CD14-positive monocyte (primary cell): ENCODE measurements at regions of chr5 and their contacts with region 1.

Region 1: GRCh38 chr5:176537608-176538504 is 654 bp upstream of the RNF44 start:
- DNase-seq: peak; percentile 99 to 100 (median 100)
- H3K4me3 ChIP-seq: peak overlapping the region; percentile 64 to 98 (median 96)
- H3K4me3 Mint-ChIP-seq: peak overlapping the region; percentile 95
- H3K27ac ChIP-seq: peak overlapping the region; percentile 93 to 96
- H3K27ac Mint-ChIP-seq: peak overlapping the region; percentile 98 to 100 (median 99)
- H3K4me1 ChIP-seq: peaks cover 71 to 86% of the 10 kb centered on the region in 2 donors
- H3K4me1 Mint-ChIP-seq: peaks cover 73% of the 10 kb centered on the region
- H3K27me3 ChIP-seq: no peaks in the 10 kb centered on the region
- H3K27me3 Mint-ChIP-seq: no peaks in the 10 kb centered on the region
- CTCF ChIP-seq: no peak

Region 2: GRCh38 chr5:176388444-176389134 is 149.3 kb before region 1 on chr5 and contains the starts of genes HIGD2A and NOP16:
- intact Hi-C with region 1: loop called (anchors 2 to 10 kb)
- DNase-seq: peak; percentile 97 to 99 (median 98)
- H3K4me3 ChIP-seq: peak within 1 kb of the TSS; percentile 66 to 98 (median 73)
- H3K4me3 Mint-ChIP-seq: peak within 1 kb of the TSS; percentile 98 to 99
- H3K27ac ChIP-seq: peak within 1 kb of the TSS; percentile 95 to 96
- H3K27ac Mint-ChIP-seq: peak within 1 kb of the TSS; percentile 98 to 100 (median 100)
- H3K4me1 ChIP-seq: peaks cover 34 to 45% of the 10 kb centered on the region in 2 donors
- H3K4me1 Mint-ChIP-seq: peaks cover 47% of the 10 kb centered on the region
- H3K27me3 ChIP-seq: no peaks in the 10 kb centered on the region
- H3K27me3 Mint-ChIP-seq: peaks cover 0 to 2% (median 0%) of the 10 kb centered on the region in 3 donors
- CTCF ChIP-seq: no peak
- polyA plus RNA-seq, gene HIGD2A: 101 to 298 (median 260) TPM
- polyA plus RNA-seq, gene NOP16: 17.2 to 23.4 (median 17.6) TPM

Region 3: GRCh38 chr5:176415952-176416924 is 121.6 kb before region 1 on chr5 and contains the start of gene CLTB:
- intact Hi-C with region 1: loop called in 1 of 2 experiments (anchors 10 kb)
- DNase-seq: peak; percentile 86 to 93 (median 87)
- H3K4me3 ChIP-seq: peak within 1 kb of the TSS; percentile 65 to 92 (median 76)
- H3K4me3 Mint-ChIP-seq: peak within 1 kb of the TSS; percentile 79 to 87
- H3K27ac ChIP-seq: peak within 1 kb of the TSS; percentile 20 to 85
- H3K27ac Mint-ChIP-seq: peak within 1 kb of the TSS; percentile 57 to 89 (median 72)
- H3K4me1 ChIP-seq: peaks cover 16 to 23% of the 10 kb centered on the region in 2 donors
- H3K4me1 Mint-ChIP-seq: peaks cover 44% of the 10 kb centered on the region
- H3K27me3 ChIP-seq: no peaks in the 10 kb centered on the region
- H3K27me3 Mint-ChIP-seq: peaks cover 2 to 5% (median 2%) of the 10 kb centered on the region in 3 donors
- CTCF ChIP-seq: peak; percentile 78
- polyA plus RNA-seq, gene CLTB: 63.2 to 87.6 (median 75.2) TPM

Region 4: DNA sequence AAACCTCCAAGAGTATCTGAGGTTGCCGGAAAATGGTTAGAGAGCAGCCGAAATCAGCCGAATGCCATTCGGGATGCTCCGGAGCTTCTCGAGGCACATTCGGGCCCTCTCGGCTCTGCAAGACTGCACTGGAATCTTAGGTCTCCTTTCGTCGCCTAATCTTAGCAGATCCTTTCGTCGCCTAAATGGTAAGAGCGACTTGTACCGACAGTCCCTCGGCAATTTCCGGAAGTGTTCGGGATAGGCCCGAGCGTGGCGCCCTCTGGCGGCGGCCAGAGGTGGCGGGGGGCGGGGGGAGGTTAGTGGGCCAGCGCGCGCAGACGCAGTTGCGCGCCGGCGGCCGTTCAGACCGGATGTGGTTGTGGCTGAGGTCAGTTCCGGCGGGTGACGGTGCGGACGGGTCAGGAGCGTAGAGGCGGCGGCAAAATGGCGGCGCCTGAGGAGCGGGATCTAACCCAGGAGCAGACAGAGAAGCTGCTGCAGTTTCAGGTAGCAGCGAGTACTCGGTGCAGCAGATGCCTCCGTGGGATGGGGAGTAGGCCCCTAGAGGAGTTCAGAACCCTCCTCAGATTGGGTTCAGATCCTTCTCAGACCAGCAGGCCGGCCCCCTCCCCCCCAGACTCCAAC is 89.8 kb before region 1 on chr5 and contains the start of gene FAF2:
- intact Hi-C with region 1: loop called (anchors 5 kb)
- DNase-seq: peak; percentile 95 to 97 (median 96)
- H3K4me3 ChIP-seq: peak within 1 kb of the TSS; percentile 84 to 98 (median 97)
- H3K4me3 Mint-ChIP-seq: peak within 1 kb of the TSS; percentile 95 to 99
- H3K27ac ChIP-seq: peak within 1 kb of the TSS; percentile 99 to 100
- H3K27ac Mint-ChIP-seq: peak within 1 kb of the TSS; percentile 99 to 100 (median 100)
- H3K4me1 ChIP-seq: peaks cover 24 to 25% of the 10 kb centered on the region in 2 donors
- H3K4me1 Mint-ChIP-seq: peaks cover 23% of the 10 kb centered on the region
- H3K27me3 ChIP-seq: no peaks in the 10 kb centered on the region
- H3K27me3 Mint-ChIP-seq: peaks cover 0 to 4% (median 0%) of the 10 kb centered on the region in 3 donors
- CTCF ChIP-seq: peak; percentile 96
- polyA plus RNA-seq, gene FAF2: 11.5 to 14.8 (median 12.2) TPM

Region 5: GRCh38 chr5:176519810-176520720 is 17.8 kb before region 1 on chr5:
- intact Hi-C with region 1: no loop called
- DNase-seq: no peak
- H3K4me3 ChIP-seq: no peak overlapping the region
- H3K4me3 Mint-ChIP-seq: no peak overlapping the region
- H3K27ac ChIP-seq: no peak overlapping the region
- H3K27ac Mint-ChIP-seq: no peak overlapping the region
- H3K4me1 ChIP-seq: peaks cover 0 to 5% of the 10 kb centered on the region in 2 donors
- H3K4me1 Mint-ChIP-seq: peaks cover 23% of the 10 kb centered on the region
- H3K27me3 ChIP-seq: no peaks in the 10 kb centered on the region
- H3K27me3 Mint-ChIP-seq: peaks cover 2 to 4% (median 3%) of the 10 kb centered on the region in 3 donors
- CTCF ChIP-seq: no peak

Region 6: GRCh38 chr5:176573564-176574296 is 35.9 kb after region 1 on chr5:
- intact Hi-C with region 1: loop called in 1 of 2 experiments (anchors 5 kb)
- DNase-seq: peak; percentile 48 to 62 (median 61)
- H3K4me3 ChIP-seq: no peak overlapping the region
- H3K4me3 Mint-ChIP-seq: no peak overlapping the region
- H3K27ac ChIP-seq: no peak overlapping the region
- H3K27ac Mint-ChIP-seq: no peak overlapping the region
- H3K4me1 ChIP-seq: no peaks in the 10 kb centered on the region
- H3K4me1 Mint-ChIP-seq: peaks cover 5% of the 10 kb centered on the region
- H3K27me3 ChIP-seq: no peaks in the 10 kb centered on the region
- H3K27me3 Mint-ChIP-seq: peaks cover 4 to 12% (median 12%) of the 10 kb centered on the region in 3 donors
- CTCF ChIP-seq: peak; percentile 95

Region 7: GRCh38 chr5:176647030-176647866 is 109.4 kb after region 1 on chr5 and contains the start of gene TSPAN17:
- intact Hi-C with region 1: loop called in 1 of 2 experiments (anchors 5 kb)
- DNase-seq: peak; percentile 96 to 99 (median 98)
- H3K4me3 ChIP-seq: peak within 1 kb of the TSS; percentile 60 to 88 (median 69)
- H3K4me3 Mint-ChIP-seq: peak within 1 kb of the TSS; percentile 84 to 92
- H3K27ac ChIP-seq: peak within 1 kb of the TSS in 1 of 2 donors; percentile 74
- H3K27ac Mint-ChIP-seq: peak within 1 kb of the TSS; percentile 32 to 85 (median 74)
- H3K4me1 ChIP-seq: peaks cover 22 to 28% of the 10 kb centered on the region in 2 donors
- H3K4me1 Mint-ChIP-seq: peaks cover 32% of the 10 kb centered on the region
- H3K27me3 ChIP-seq: no peaks in the 10 kb centered on the region
- H3K27me3 Mint-ChIP-seq: peaks cover 2 to 6% (median 4%) of the 10 kb centered on the region in 3 donors
- CTCF ChIP-seq: no peak
- polyA plus RNA-seq, gene TSPAN17: 22.2 to 27.7 (median 24.1) TPM

Region 8: GRCh38 chr5:176908675-176909368 is 371.0 kb after region 1 on chr5:
- intact Hi-C with region 1: no loop called
- DNase-seq: peak in 2 of 3 donors; percentile 58 to 64
- H3K4me3 ChIP-seq: peak overlapping the region in 1 of 3 experiments; percentile 19
- H3K4me3 Mint-ChIP-seq: no peak overlapping the region
- H3K27ac ChIP-seq: peak overlapping the region in 1 of 2 donors; percentile 74
- H3K27ac Mint-ChIP-seq: peak overlapping the region; percentile 63 to 94 (median 83)
- H3K4me1 ChIP-seq: peaks cover 26 to 34% of the 10 kb centered on the region in 2 donors
- H3K4me1 Mint-ChIP-seq: peaks cover 37% of the 10 kb centered on the region
- H3K27me3 ChIP-seq: no peaks in the 10 kb centered on the region
- H3K27me3 Mint-ChIP-seq: no peaks in the 10 kb centered on the region
- CTCF ChIP-seq: no peak

Region 9: DNA sequence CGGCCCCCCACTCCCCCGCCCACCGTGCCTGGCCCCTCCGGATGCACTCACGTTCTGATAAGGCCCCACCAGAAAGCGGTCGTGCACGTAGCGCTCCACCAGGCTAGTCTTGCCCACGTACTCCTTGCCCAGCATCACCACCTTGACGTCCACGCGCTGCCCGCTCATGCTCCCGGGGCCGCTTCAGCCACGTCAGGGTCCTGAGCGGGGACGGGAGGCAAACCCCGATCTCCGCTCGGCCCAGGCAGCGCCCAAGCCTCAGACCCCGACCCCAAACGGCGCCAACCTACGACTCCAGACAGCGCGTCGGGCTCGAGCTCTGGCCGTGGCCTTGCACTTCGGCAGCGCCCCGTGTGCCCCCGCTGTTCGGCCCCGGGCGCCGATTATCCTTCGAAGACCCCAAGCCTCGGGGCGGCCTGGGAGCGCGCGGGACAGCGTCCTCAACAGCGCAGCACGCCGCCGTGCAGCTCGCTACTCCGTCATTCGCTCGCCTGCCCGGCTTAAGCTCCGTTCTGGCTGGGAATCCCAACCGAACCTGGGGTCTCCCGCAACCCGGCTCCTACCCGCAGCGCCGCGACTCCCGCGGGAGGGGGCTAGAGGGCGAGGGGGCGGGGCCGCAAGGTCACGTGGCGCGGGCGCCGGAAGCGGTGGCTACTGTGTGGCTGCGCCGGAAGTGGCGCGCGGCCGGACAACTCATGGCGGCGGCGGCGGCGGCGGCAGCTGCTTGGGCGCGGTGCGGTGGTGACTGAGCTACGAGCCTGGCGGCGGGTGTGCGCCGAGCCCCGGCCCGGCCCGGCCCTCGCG is 765.5 kb after region 1 on chr5 and contains the starts of genes PRELID1 and RAB24:
- intact Hi-C with region 1: loop called in 1 of 2 experiments (anchors 5 kb)
- DNase-seq: peak; percentile 84 to 92 (median 92)
- H3K4me3 ChIP-seq: peak within 1 kb of the TSS; percentile 91 to 97 (median 96)
- H3K4me3 Mint-ChIP-seq: peak within 1 kb of the TSS; percentile 93 to 96
- H3K27ac ChIP-seq: peak within 1 kb of the TSS; percentile 79 to 95
- H3K27ac Mint-ChIP-seq: peak within 1 kb of the TSS; percentile 91 to 99 (median 96)
- H3K4me1 ChIP-seq: peaks cover 83 to 94% of the 10 kb centered on the region in 2 donors
- H3K4me1 Mint-ChIP-seq: peaks cover 81% of the 10 kb centered on the region
- H3K27me3 ChIP-seq: no peaks in the 10 kb centered on the region
- H3K27me3 Mint-ChIP-seq: peaks cover 0 to 2% (median 0%) of the 10 kb centered on the region in 3 donors
- CTCF ChIP-seq: peak; percentile 47
- polyA plus RNA-seq, gene PRELID1: 264 to 510 (median 490) TPM
- polyA plus RNA-seq, gene RAB24: 74.3 to 465 (median 94.4) TPM